ENCODE measurements at regions of chr20 and their contacts with region 1.

Region 1: GRCh38 chr20:1466211-1467081 is at the start of gene NSFL1C:
- DNase-seq: peak; percentile 94 to 99 (median 98)
- ATAC-seq: peak; percentile 96
- H3K4me3 ChIP-seq: peak within 1 kb of the TSS; percentile 73
- H3K4me3 Mint-ChIP-seq: peak within 1 kb of the TSS; percentile 88
- H3K27ac ChIP-seq: peak within 1 kb of the TSS; percentile 41 to 84
- H3K27ac Mint-ChIP-seq: peak within 1 kb of the TSS; percentile 68
- H3K4me1 ChIP-seq: peaks cover 34% of the 10 kb centered on the region
- H3K4me1 Mint-ChIP-seq: peaks cover 49% of the 10 kb centered on the region
- H3K27me3 ChIP-seq: peaks cover 0 to 2% of the 10 kb centered on the region in 2 experiments
- H3K27me3 Mint-ChIP-seq: peaks cover 10% of the 10 kb centered on the region
- CTCF ChIP-seq: peak; percentile 100
- total RNA-seq, gene NSFL1C: 53.2 to 53.4 TPM

Region 2: GRCh38 chr20:1204113-1204512 is 262.3 kb before region 1 on chr20:
- CTCF ChIA-PET with region 1: no interaction called
- POLR2A ChIA-PET with region 1: no interaction called
- intact Hi-C with region 1: no loop called
- DNase-seq: no peak
- ATAC-seq: no peak
- H3K4me3 ChIP-seq: no peak overlapping the region
- H3K4me3 Mint-ChIP-seq: no peak overlapping the region
- H3K27ac ChIP-seq: no peak overlapping the region
- H3K27ac Mint-ChIP-seq: no peak overlapping the region
- H3K4me1 ChIP-seq: no peaks in the 10 kb centered on the region
- H3K4me1 Mint-ChIP-seq: peaks cover 8% of the 10 kb centered on the region
- H3K27me3 ChIP-seq: no peaks in the 10 kb centered on the region
- H3K27me3 Mint-ChIP-seq: no peaks in the 10 kb centered on the region
- CTCF ChIP-seq: no peak

Region 3: DNA sequence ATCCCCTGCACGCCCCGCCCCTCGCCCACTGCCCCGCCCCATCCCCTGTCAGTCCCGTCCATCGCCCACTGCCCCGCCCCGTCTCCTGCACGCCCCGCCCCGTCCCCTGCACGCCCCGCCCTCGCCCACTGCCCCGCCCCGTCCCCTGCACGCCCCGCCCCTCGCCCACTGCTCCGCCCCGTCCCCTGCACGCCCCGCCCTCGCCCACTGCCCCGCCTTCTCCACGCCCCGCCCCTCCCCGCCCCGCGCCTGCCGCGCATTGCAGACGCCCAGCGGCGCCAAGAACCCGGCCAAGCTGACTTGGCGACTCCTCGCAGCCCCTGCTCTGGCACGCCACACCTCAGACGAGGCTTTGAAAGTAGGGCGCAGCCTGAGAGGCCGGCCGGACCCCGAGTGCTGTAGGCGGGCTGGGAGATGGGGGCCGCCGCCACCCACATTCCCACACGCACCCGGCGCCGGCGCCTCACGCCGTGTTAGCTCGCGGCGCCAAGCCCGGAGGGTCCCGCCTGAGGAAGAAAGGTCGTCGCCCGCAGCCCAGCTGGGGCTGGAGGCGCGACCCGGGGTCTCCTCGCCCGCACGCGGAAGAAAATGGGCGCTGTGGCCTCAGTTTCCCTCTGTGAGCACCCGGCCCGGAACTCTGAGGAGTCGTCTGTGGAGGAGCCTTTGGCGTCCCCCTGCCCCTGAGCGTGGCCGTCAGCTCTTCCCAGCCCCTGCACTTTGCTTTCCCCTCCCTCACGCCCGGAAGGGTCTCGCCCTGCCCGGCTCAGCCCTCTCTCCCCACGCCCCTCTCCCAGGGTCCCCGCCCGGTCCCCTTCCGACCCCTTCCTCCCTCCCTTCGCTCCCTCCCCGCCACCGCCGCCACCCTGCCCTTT is 240.4 kb before region 1 on chr20 and contains the start of gene RAD21L1:
- CTCF ChIA-PET with region 1: interaction called, 3 read pairs
- POLR2A ChIA-PET with region 1: no interaction called
- intact Hi-C with region 1: loop called in 1 of 2 experiments (anchors 2 kb)
- DNase-seq: peak; percentile 73 to 92 (median 80)
- ATAC-seq: peak; percentile 80
- H3K4me3 ChIP-seq: peak within 1 kb of the TSS; percentile 77
- H3K4me3 Mint-ChIP-seq: peak within 1 kb of the TSS; percentile 92
- H3K27ac ChIP-seq: peak within 1 kb of the TSS in 1 of 2 donors; percentile 22
- H3K27ac Mint-ChIP-seq: peak within 1 kb of the TSS; percentile 53
- H3K4me1 ChIP-seq: peaks cover 18% of the 10 kb centered on the region
- H3K4me1 Mint-ChIP-seq: peaks cover 19% of the 10 kb centered on the region
- H3K27me3 ChIP-seq: peaks cover 0 to 15% of the 10 kb centered on the region in 2 experiments
- H3K27me3 Mint-ChIP-seq: peaks cover 21% of the 10 kb centered on the region
- CTCF ChIP-seq: no peak
- total RNA-seq, gene RAD21L1: 0.58 TPM in 1 of 2 experiments, not detected in the other

Region 4: GRCh38 chr20:1392823-1393506 is 73.5 kb before region 1 on chr20 and contains the start of gene FKBP1A:
- CTCF ChIA-PET with region 1: interaction called, 13 read pairs
- POLR2A ChIA-PET with region 1: interaction called, 11 read pairs
- intact Hi-C with region 1: loop called (anchors 1 to 2 kb)
- DNase-seq: peak; percentile 84 to 97 (median 92)
- ATAC-seq: peak; percentile 83
- H3K4me3 ChIP-seq: peak within 1 kb of the TSS; percentile 85
- H3K4me3 Mint-ChIP-seq: peak within 1 kb of the TSS; percentile 98
- H3K27ac ChIP-seq: peak within 1 kb of the TSS; percentile 37 to 72
- H3K27ac Mint-ChIP-seq: peak within 1 kb of the TSS; percentile 89
- H3K4me1 ChIP-seq: peaks cover 60% of the 10 kb centered on the region
- H3K4me1 Mint-ChIP-seq: peaks cover 61% of the 10 kb centered on the region
- H3K27me3 ChIP-seq: no peaks in the 10 kb centered on the region
- H3K27me3 Mint-ChIP-seq: no peaks in the 10 kb centered on the region
- CTCF ChIP-seq: no peak
- total RNA-seq, gene FKBP1A: 43.3 to 45.4 TPM

Region 5: GRCh38 chr20:1776681-1777475 is 310.4 kb after region 1 on chr20:
- CTCF ChIA-PET with region 1: interaction called, 8 read pairs
- POLR2A ChIA-PET with region 1: interaction called, 5 read pairs
- intact Hi-C with region 1: loop called in 1 of 2 experiments (anchors 2 kb)
- DNase-seq: peak; percentile 70 to 90 (median 81)
- ATAC-seq: peak; percentile 93
- H3K4me3 ChIP-seq: peak overlapping the region; percentile 66
- H3K4me3 Mint-ChIP-seq: peak overlapping the region; percentile 81
- H3K27ac ChIP-seq: no peak overlapping the region
- H3K27ac Mint-ChIP-seq: no peak overlapping the region
- H3K4me1 ChIP-seq: peaks cover 9% of the 10 kb centered on the region
- H3K4me1 Mint-ChIP-seq: peaks cover 16% of the 10 kb centered on the region
- H3K27me3 ChIP-seq: peaks cover 0 to 11% of the 10 kb centered on the region in 2 experiments
- H3K27me3 Mint-ChIP-seq: peaks cover 17% of the 10 kb centered on the region
- CTCF ChIP-seq: peak; percentile 77

Region 6: DNA sequence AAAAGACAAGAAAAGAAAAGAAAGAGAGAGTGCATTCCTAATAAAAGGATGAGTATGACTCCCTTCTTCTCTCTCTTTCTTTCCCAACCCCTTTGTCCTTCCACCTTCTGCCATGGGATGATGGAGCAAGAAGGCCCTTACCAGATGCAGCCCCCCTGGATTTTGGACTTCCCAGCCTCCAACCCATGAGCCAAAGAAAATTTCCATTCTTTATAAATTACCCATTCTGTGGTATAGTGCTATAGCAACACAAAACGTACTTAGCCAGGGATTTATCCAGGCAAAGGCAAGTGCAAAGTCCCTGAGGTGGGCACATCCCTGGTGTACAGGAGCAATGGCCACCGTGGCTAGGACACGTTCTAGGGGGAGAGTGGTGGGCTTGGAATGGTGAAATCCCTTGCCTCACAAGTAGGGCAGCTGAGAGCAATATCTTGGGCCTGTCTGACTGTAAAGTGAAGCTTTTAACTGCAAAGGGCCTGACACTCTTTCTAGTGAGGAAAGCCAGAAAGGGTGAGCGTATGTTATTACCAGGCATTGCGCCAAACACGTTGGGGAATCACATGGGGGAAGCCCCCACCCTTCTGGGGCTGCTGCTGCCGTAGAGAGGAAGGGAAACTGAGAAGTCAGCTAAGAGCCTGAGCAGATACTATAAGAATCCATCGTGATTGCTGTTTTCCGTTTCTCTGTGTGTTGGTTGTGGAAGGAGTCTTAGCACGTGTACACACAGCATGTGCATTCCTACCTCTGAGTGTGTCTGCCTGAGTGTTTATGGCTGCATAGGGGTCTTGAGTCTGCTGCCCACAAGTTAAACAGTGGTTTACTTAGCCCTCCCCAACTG is 378.1 kb after region 1 on chr20:
- CTCF ChIA-PET with region 1: no interaction called
- POLR2A ChIA-PET with region 1: no interaction called
- intact Hi-C with region 1: no loop called
- DNase-seq: peak in 3 of 14 experiments; percentile 15 to 65 (median 62)
- ATAC-seq: no peak
- H3K4me3 ChIP-seq: no peak overlapping the region
- H3K4me3 Mint-ChIP-seq: no peak overlapping the region
- H3K27ac ChIP-seq: no peak overlapping the region
- H3K27ac Mint-ChIP-seq: no peak overlapping the region
- H3K4me1 ChIP-seq: no peaks in the 10 kb centered on the region
- H3K4me1 Mint-ChIP-seq: no peaks in the 10 kb centered on the region
- H3K27me3 ChIP-seq: no peaks in the 10 kb centered on the region
- H3K27me3 Mint-ChIP-seq: peaks cover 5% of the 10 kb centered on the region
- CTCF ChIP-seq: no peak

Measured in CD4-positive, alpha-beta T cell (primary cell).